A673 (cell line): ENCODE measurements at regions of chr2 and their contacts with region 1.

Region 1: DNA sequence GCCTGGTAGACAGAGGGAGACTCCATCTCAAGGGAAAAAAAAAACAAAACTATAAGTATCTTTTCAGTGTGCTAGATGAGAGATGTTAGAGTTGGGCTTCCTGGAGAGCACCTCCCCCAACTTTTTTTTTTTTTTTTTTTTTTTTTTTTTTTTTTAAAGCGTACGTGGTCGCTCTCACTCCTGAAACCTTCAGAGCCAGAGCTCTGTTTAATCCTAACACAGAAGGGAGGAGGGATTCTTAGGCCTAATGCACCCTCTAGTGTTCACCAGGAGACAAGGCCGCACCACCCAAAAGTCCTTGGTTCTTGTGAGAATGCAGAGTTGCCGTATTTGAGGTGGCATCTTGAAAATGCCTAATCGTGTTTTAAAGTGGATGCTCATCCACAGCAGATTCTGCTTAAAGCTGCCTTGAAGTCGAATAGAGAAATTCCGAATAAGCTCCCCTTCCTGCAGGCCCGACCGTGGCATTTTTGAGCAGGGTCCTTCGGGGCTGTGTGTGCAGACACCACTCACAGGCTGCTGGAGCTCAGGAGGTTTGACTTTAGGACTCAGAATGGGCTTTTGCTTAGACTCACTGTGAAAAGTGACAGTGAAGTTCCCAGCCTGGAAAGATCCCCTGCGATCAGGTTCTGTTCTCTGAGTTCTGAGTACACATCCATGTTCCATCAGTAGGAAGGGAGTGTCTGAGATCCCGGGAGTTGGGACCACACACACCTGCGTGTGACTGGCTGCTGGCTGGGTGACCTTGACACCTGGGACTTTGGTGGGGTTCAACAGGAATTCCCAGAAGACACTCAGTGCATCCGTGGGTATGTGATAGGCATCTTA is 252.6 kb downstream of the AGAP1 start:
- DNase-seq: peak; percentile 84
- H3K4me3 ChIP-seq: no peak overlapping the region
- H3K27ac ChIP-seq: no peak overlapping the region
- H3K4me1 ChIP-seq: peaks cover 7% of the 10 kb centered on the region
- H3K27me3 ChIP-seq: no peaks in the 10 kb centered on the region
- CTCF ChIP-seq: peak; percentile 89

Region 2: GRCh38 chr2:234550511-234551107 is 1195.9 kb before region 1 on chr2:
- CTCF ChIA-PET with region 1: no interaction called
- POLR2A ChIA-PET with region 1: no interaction called
- intact Hi-C with region 1: loop called (anchors 10 kb)
- DNase-seq: peak; percentile 86
- H3K4me3 ChIP-seq: no peak overlapping the region
- H3K27ac ChIP-seq: no peak overlapping the region
- H3K4me1 ChIP-seq: no peaks in the 10 kb centered on the region
- H3K27me3 ChIP-seq: no peaks in the 10 kb centered on the region
- CTCF ChIP-seq: peak; percentile 93

Region 3: GRCh38 chr2:235116885-235117492 is 629.5 kb before region 1 on chr2:
- CTCF ChIA-PET with region 1: interaction called, 7 read pairs
- POLR2A ChIA-PET with region 1: interaction called, 3 read pairs
- intact Hi-C with region 1: loop called (anchors 5 kb)
- DNase-seq: peak; percentile 79
- H3K4me3 ChIP-seq: no peak overlapping the region
- H3K27ac ChIP-seq: no peak overlapping the region
- H3K4me1 ChIP-seq: no peaks in the 10 kb centered on the region
- H3K27me3 ChIP-seq: no peaks in the 10 kb centered on the region
- CTCF ChIP-seq: peak; percentile 74

Region 4: GRCh38 chr2:235551965-235552364 is 194.5 kb before region 1 on chr2:
- CTCF ChIA-PET with region 1: interaction called, 10 read pairs
- POLR2A ChIA-PET with region 1: interaction called, 7 read pairs
- intact Hi-C with region 1: no loop called
- DNase-seq: peak; percentile 70
- H3K4me3 ChIP-seq: no peak overlapping the region
- H3K27ac ChIP-seq: no peak overlapping the region
- H3K4me1 ChIP-seq: peaks cover 10% of the 10 kb centered on the region
- H3K27me3 ChIP-seq: no peaks in the 10 kb centered on the region
- CTCF ChIP-seq: peak; percentile 72

Region 5: GRCh38 chr2:235663875-235664274 is 82.6 kb before region 1 on chr2:
- CTCF ChIA-PET with region 1: no interaction called
- POLR2A ChIA-PET with region 1: interaction called, 14 read pairs
- intact Hi-C with region 1: no loop called
- DNase-seq: no peak
- H3K4me3 ChIP-seq: no peak overlapping the region
- H3K27ac ChIP-seq: no peak overlapping the region
- H3K4me1 ChIP-seq: peaks cover 20% of the 10 kb centered on the region
- H3K27me3 ChIP-seq: no peaks in the 10 kb centered on the region
- CTCF ChIP-seq: no peak

Region 6: DNA sequence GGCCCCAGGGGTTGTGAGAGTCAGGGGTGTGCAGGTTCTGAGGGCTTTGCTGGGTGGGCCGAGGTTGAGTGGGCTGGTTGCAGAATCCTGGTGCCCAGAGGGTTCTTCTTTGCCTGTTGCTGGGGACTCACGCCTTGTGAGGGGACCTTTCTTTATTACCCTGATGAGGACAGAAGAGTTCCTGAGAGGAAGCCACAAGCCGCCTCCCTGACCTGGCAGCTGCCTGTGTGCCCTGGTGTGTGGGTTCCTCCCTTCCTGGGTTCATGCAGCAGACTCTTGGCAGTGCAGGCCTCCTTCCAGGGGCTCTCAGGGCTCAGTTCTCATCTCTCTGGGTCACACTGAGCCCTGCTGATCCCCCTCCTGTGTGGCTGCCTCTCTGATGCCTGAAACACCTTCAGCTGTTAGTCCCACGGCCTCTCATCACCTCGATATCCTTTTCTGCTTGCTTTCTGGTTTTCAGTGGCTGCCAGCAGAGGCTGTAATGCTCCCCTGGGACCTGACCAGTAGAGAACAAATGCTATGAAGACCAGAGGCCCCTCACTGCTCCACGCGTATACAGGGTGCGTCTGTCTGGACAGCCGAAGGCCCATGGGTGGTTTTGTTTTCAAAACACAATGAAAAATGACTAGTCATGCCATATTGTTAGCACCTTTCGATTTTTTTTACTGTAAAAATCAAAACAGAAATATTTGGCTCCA is 61.3 kb before region 1 on chr2:
- CTCF ChIA-PET with region 1: no interaction called
- POLR2A ChIA-PET with region 1: no interaction called
- intact Hi-C with region 1: no loop called
- DNase-seq: no peak
- H3K4me3 ChIP-seq: no peak overlapping the region
- H3K27ac ChIP-seq: no peak overlapping the region
- H3K4me1 ChIP-seq: no peaks in the 10 kb centered on the region
- H3K27me3 ChIP-seq: no peaks in the 10 kb centered on the region
- CTCF ChIP-seq: no peak

Region 7: DNA sequence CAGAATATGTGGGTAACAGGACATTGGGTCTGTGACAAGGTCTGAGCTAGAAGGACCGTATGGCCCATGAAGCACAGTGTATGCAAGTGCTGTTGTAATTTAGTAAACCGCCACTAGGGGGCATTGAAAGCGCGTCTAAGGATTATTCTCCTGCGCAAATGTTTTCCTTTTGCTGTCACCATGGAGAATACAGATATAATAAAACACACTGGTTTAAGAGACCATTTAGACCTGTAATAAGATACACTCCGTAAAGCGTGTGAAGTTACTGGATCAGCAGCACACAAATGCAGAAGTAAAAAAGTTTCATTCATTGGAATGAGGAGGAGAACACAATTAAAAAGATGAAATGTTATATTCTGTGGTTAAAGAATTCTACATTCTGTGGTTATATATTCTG is 19.8 kb after region 1 on chr2:
- CTCF ChIA-PET with region 1: interaction called, 11 read pairs
- POLR2A ChIA-PET with region 1: no interaction called
- intact Hi-C with region 1: no loop called
- DNase-seq: peak; percentile 84
- H3K4me3 ChIP-seq: no peak overlapping the region
- H3K27ac ChIP-seq: no peak overlapping the region
- H3K4me1 ChIP-seq: no peaks in the 10 kb centered on the region
- H3K27me3 ChIP-seq: no peaks in the 10 kb centered on the region
- CTCF ChIP-seq: peak; percentile 84